Aorta (tissue), 5 donors: ENCODE measurements at regions of chr15 and their contacts with region 1.

Region 1: GRCh38 chr15:27426805-27427204 is 455.8 kb downstream of the GABRG3 start:
- DNase-seq: no peak
- ATAC-seq: no peak
- H3K4me3 ChIP-seq: no peak overlapping the region
- H3K27ac ChIP-seq: no peak overlapping the region
- H3K4me1 ChIP-seq: no peaks in the 10 kb centered on the region
- H3K27me3 ChIP-seq: no peaks in the 10 kb centered on the region

Region 2: GRCh38 chr15:27527490-27528067 is 100.8 kb after region 1 on chr15:
- intact Hi-C with region 1: no loop called
- DNase-seq: no peak
- ATAC-seq: no peak
- H3K4me3 ChIP-seq: no peak overlapping the region
- H3K27ac ChIP-seq: no peak overlapping the region
- H3K4me1 ChIP-seq: no peaks in the 10 kb centered on the region
- H3K27me3 ChIP-seq: no peaks in the 10 kb centered on the region

Region 3: DNA sequence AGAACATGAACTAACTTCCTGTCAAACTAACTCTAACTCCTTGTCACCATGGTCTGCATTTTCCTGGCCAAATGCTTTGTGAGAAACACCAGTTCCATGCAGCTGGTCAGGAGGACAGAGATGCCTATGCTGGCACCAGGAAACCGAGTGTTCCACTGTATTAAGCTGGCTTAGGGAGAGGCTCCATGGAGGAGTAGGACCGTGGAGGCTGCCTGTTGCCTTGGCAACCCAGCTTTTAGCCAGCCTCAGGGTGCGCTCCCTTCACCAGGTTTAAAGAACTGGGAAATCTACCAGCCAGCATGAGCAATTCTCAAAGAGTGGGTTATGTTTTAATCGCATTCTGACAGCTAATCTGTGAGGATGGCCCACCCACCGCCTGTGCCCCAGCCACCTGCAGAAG is 278.3 kb after region 1 on chr15:
- intact Hi-C with region 1: loop called in 1 of 2 experiments (anchors 10 kb)
- DNase-seq: no peak
- ATAC-seq: no peak
- H3K4me3 ChIP-seq: no peak overlapping the region
- H3K27ac ChIP-seq: no peak overlapping the region
- H3K4me1 ChIP-seq: no peaks in the 10 kb centered on the region
- H3K27me3 ChIP-seq: no peaks in the 10 kb centered on the region